Vagina (tissue), 2 donors: ENCODE measurements at regions of chr4 and their contacts with region 1.

Region 1: GRCh38 chr4:69156913-69157312 is 57.6 kb downstream of the UGT2B11 start:
- DNase-seq: no peak
- H3K4me3 ChIP-seq: no peak overlapping the region
- H3K27ac ChIP-seq: no peak overlapping the region
- H3K4me1 ChIP-seq: no peaks in the 10 kb centered on the region
- H3K27me3 ChIP-seq: no peaks in the 10 kb centered on the region
- CTCF ChIP-seq: no peak
- POLR2A ChIP-seq: no peak

Region 2: DNA sequence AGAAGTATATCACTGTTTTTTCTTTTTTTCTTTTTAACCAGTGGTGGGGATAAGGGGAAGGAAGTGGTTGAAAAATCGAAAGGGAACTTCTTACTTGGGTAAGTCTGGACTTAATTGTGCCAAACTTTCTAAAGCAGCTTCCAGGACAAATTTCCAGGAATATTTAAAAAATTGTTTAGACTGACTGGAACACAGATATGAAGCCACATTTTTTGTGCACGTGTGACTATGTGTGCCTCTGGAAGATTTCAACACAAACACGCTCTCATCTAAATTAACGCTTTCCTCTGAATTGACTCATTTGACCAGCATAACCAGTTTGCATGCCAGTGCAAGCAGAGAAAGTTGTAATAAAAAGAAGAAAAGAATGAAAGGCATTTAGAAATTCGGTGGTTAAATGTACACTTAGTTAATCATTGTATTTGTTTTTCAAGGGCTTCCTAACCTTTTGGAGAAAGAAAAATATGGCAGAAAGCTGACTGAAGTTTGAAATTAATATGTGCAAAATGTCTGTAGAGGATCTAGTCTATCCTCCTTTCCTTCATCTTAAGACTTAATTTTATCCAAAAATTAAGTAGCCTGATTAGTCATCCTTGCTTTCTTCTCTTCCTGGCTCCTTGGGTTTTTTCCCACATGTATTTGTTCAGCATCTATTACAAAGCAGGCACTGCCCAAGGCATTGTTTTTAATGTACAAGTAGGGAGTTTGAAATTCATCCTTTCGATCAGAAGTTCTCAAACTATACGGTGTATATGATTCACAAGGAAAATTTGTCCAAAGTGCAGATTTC is 788.0 kb before region 1 on chr4:
- intact Hi-C with region 1: loop called (anchors 5 kb)
- DNase-seq: no peak
- H3K4me3 ChIP-seq: no peak overlapping the region
- H3K27ac ChIP-seq: no peak overlapping the region
- H3K4me1 ChIP-seq: peaks cover 5% of the 10 kb centered on the region
- H3K27me3 ChIP-seq: no peaks in the 10 kb centered on the region
- CTCF ChIP-seq: no peak
- POLR2A ChIP-seq: no peak